ENCODE measurements at regions of chr1 and their contacts with region 1.

Region 1: GRCh38 chr1:203038891-203039608 is 12.8 kb downstream of the PPFIA4 start:
- DNase-seq: peak; percentile 73
- H3K4me3 Mint-ChIP-seq: no peak overlapping the region
- H3K27ac Mint-ChIP-seq: no peak overlapping the region
- H3K4me1 Mint-ChIP-seq: no peaks in the 10 kb centered on the region
- H3K27me3 Mint-ChIP-seq: peaks cover 6% of the 10 kb centered on the region

Region 2: DNA sequence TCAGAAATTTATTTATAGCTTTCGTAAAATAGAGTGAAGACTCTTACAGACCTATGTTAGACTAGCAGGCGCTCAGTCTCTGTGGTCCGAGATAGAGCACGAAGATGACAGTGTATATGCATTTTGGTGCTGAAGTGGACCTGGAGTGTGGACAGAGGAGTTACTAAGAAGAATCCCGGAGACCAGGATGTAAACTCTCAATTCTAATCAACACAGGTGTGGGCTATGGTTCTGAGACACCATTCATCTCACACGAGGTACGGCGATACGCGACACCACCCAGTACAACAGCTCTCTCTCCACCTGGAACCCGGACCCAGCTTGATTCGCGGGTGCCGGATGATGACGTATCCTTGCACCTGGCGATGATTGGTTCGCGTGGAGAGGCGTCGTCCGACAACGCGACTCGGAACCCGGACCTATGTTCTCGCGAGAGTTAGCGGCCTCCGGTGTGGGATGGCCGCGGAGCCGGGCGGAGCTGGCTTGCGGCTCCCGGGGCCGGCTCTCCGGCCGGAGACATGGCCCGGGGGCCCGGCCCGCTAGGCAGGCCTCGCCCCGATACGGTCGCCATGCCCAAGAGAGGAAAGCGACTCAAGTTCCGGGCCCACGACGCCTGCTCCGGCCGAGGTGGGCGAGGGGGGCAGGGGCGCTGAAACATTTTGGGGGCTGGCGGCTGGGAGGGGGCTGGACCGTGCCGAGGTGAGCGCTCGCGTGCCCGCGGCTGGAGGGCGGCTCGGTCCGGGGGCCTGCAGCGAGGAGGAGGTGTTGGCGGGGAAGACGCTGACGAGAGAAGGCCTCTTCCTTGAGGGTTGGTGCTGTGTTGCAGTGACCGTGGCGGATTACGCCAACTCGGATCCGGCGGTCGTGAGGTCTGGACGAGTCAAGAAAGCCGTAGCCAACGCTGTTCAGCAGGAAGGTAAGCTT is 31.8 kb before region 1 on chr1 and contains the start of gene TMEM183A:
- CTCF ChIA-PET with region 1: interaction called, 15 read pairs
- POLR2A ChIA-PET with region 1: no interaction called
- intact Hi-C with region 1: no loop called
- DNase-seq: peak; percentile 97
- H3K4me3 Mint-ChIP-seq: peak within 1 kb of the TSS; percentile 80
- H3K27ac Mint-ChIP-seq: peak within 1 kb of the TSS; percentile 96
- H3K4me1 Mint-ChIP-seq: peaks cover 24% of the 10 kb centered on the region
- H3K27me3 Mint-ChIP-seq: no peaks in the 10 kb centered on the region
- total RNA-seq, gene TMEM183A: 68.1 to 76.5 TPM

Region 3: DNA sequence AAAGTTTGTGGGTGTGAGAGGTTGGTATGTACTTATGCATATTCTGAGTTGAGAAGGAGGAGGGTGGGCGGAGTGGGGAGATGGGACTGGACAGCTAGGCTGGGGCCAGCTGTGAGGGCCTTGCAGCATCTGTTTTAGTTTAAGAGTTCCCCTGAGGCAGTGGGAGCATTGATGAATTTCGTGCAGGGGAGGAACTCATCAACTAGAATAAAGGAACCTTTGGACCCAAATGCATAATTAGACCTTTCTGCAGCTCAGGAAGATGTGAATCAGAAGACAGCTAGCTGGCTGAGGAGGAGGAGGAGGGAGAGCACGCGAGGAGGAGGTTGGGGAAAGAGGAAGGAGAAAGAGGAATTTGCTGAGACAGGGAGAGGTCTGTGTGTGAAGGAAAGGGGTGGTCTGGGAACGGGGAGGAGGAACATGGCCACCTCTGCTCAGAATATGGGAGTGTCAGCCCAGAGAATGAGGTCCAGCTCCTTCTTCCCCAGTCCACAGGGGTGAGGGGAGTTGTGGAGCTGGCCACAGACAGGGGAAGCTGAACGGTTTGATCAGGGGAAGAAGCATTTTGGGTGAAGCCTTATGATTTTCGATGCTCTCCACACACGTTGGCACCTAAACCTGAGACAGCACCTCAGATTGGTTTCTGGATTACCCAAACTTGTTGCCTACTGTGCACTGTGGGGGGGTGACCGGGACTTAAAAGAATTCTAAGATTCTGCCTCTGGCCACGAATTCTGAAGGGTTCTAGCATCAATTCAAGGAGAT is 19.0 kb after region 1 on chr1:
- CTCF ChIA-PET with region 1: interaction called, 30 read pairs
- POLR2A ChIA-PET with region 1: no interaction called
- intact Hi-C with region 1: no loop called
- DNase-seq: no peak
- H3K4me3 Mint-ChIP-seq: no peak overlapping the region
- H3K27ac Mint-ChIP-seq: no peak overlapping the region
- H3K4me1 Mint-ChIP-seq: no peaks in the 10 kb centered on the region
- H3K27me3 Mint-ChIP-seq: no peaks in the 10 kb centered on the region

Region 4: DNA sequence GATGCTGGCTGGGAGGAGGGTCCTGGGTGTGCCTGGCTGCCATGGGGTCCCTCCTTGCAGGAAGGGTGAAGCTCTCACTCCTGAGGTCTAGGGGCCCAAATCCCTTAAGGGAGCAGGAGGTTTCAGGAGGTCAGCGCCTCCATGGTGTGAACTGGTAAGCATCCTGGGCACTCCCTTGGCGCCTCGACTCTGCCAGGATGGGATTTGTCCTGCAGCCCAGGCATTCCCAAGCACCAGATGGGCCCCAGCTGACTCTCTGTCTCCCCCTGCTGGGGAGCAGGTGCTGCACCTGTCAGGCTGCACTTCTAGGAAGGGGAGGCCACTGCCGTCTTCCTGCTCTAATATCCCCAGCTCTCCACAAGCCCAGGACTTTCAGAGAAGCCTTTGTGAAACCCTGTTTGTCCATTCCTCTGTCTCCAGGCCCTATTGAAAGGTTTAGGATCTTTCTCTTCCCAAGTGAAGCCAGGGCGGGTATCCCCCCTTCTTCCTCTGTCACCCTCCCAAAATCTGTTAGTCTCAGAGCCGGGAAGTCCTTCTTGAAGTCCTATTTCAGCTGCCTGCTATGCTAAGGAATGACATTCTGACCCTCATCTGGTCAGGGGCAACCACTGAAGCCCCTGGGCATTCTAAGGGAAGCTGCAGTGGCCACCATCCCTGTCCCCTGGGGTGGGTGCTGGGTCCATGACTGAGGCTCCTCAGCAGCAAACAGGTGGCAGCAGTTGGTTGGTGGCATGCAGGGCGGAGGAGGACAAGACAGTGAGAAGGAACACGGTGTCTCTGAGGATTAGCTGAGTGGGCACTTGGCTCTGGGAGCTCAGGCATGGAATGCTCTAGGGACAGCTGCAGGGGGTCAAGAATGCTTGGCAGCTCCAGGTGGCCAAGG is 133.3 kb after region 1 on chr1:
- CTCF ChIA-PET with region 1: interaction called, 79 read pairs
- POLR2A ChIA-PET with region 1: no interaction called
- intact Hi-C with region 1: loop called (anchors 1 kb)
- DNase-seq: peak; percentile 58
- H3K4me3 Mint-ChIP-seq: no peak overlapping the region
- H3K27ac Mint-ChIP-seq: no peak overlapping the region
- H3K4me1 Mint-ChIP-seq: no peaks in the 10 kb centered on the region
- H3K27me3 Mint-ChIP-seq: no peaks in the 10 kb centered on the region

Region 5: DNA sequence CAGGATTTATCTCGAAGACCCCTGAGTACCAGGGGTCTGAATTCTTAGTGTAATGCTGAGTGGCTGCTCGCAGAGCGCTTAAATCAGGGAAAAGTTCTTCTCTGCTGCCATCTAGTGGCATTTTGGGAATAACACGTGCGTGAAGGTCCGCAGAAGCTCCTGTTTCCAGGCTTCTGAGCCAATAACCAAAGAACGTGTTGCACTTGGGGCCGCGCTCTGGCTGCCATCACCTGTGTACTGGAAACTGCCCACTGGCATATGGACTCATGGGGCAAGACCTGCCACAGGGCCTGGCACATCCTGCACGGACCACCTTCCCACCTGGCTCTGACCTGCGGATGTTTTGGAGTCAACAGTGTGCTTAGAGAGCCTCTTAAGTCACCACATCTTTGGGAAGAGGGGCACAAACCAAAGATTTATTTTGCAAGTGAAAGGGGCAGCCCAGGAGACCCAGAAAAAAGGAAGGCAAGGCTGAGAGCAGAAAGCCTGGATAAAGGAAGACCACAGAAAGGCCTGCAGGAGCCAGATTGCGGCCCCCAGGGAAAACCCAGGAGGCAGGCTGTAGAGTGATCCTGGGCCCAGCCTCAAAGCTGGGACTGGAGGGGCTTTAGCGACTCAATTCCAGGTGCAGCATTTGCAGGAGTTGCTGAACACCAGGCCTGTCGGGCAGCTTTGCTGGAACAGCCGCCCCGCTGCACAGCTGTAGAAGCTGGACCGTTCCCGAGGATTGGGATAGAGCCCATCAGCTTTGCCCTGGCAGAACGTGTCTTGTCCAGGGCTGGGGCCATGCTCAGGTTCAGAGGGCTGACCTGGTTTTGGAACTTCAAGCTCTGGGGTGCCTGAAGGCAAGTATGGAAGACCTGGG is 177.5 kb after region 1 on chr1:
- CTCF ChIA-PET with region 1: interaction called, 248 read pairs
- POLR2A ChIA-PET with region 1: no interaction called
- intact Hi-C with region 1: loop called (anchors 1 kb)
- DNase-seq: peak; percentile 56
- H3K4me3 Mint-ChIP-seq: no peak overlapping the region
- H3K27ac Mint-ChIP-seq: no peak overlapping the region
- H3K4me1 Mint-ChIP-seq: no peaks in the 10 kb centered on the region
- H3K27me3 Mint-ChIP-seq: peaks cover 8% of the 10 kb centered on the region